Dorsolateral prefrontal cortex (tissue), 120 donors: ENCODE measurements at regions of chr2 and their contacts with region 1.

Region 1: GRCh38 chr2:27703638-27704341 is 40.1 kb downstream of the SLC4A1AP start:
- DNase-seq: peak; percentile 62 to 90 (median 84)
- H3K4me3 ChIP-seq: no peak overlapping the region
- H3K27ac ChIP-seq: peak overlapping the region in 2 of 59 donors; percentile 38 to 47
- H3K27me3 ChIP-seq: no peaks in the 10 kb centered on the region
- CTCF ChIP-seq: peak; percentile 79 to 97 (median 93)

Region 2: DNA sequence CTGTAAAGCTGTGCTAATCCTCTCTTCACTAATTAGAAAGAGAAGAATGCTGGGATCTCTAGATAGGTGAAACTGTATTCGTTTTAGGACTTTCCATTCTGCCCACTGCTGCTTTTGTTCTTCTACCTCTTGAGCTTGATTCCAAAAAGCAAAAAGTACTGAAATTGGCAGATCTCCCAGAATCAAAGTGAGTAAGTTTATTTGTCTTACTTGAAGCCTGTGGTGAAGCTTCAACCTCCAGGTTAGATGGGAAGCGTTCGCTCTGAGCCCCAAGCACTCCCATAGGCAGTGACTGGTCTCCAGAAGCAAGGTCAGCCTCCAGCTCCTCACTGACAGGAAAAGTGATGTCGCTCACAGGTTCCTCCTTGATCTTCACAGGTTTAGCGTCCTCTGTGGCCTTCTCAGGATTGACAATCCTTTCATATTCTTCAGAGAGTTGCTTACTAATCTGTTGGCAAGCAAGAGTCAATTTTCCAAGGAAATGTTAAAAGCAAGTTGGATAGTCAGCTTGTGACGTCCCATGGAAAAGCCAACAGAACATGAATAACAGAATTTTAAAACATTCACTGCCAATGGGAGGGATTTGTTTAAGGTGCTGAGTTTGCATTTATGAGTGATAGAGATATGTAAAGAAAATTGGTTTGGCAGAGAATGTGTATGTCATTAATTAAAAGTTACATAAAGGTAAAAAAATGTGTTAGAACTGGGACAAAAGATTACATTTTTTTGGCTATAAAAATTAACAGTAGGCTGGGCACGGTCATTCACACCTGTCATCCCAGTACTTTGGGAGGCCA is 48.4 kb before region 1 on chr2:
- intact Hi-C with region 1: no loop called
- DNase-seq: no peak
- H3K4me3 ChIP-seq: no peak overlapping the region
- H3K27ac ChIP-seq: peak overlapping the region in 5 of 59 donors; percentile 3 to 50 (median 22)
- H3K27me3 ChIP-seq: no peaks in the 10 kb centered on the region
- CTCF ChIP-seq: no peak

Region 3: GRCh38 chr2:28452534-28453081 is 748.8 kb after region 1 on chr2:
- intact Hi-C with region 1: loop called in 1 of 2 experiments (anchors 1 kb)
- DNase-seq: peak in 8 of 10 donors; percentile 15 to 67 (median 50)
- H3K4me3 ChIP-seq: no peak overlapping the region
- H3K27ac ChIP-seq: no peak overlapping the region
- H3K27me3 ChIP-seq: no peaks in the 10 kb centered on the region
- CTCF ChIP-seq: peak; percentile 40 to 86 (median 76)